ENCODE measurements at regions of chr4 and their contacts with region 1.

Region 1: DNA sequence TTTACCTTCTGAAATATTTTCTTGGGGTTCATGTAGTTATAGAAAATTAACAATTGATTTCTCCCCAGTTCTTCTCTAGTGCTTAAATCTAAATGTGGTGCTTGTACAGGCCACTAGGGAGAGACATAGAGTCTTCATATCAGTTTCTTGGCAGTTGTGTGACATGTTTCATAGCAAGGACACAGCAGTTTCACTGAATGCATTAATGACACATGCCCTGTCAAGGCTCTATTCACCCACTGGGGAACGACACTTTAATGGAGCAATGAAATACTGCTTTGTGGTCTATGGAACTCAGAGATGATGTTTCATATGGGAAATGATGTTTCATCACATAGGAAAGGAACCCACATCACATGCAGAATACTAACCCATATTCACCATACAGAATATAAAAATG is 2.8 kb downstream of the VEGFC start:
- DNase-seq: no peak

Region 2: GRCh38 chr4:176383273-176384077 is 406.5 kb before region 1 on chr4:
- intact Hi-C with region 1: loop called (anchors 5 kb)
- DNase-seq: no peak

Region 3: DNA sequence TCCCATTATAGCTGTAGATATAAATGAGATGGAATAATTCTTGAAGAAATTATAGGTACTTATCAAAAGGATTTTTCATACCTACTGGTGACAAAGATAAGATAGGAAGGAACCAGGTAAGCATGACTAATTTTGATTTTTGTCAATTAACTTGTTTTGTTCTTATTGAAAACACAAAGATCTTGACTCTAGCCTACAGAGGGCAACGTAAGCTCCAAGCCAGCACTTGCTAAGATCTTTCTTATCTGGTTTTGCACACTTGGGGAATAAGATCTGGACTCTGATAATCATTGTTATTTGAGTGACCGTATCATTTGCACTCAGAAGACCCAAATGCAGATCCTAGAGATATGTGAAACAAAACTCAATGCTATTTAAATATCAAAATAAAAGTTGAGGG is 220.7 kb before region 1 on chr4:
- intact Hi-C with region 1: loop called (anchors 5 kb)
- DNase-seq: no peak

Measured in cardiac septum (tissue), 1 donor.